Activated CD4-positive, alpha-beta T cell treated with anti-CD3 and anti-CD28 coated beads for 36 hours (primary cell): ENCODE measurements at regions of chr17 and their contacts with region 1.

Region 1: GRCh38 chr17:17812211-17813057 is 24.4 kb downstream of the SREBF1 start:
- DNase-seq: peak; percentile 78
- ATAC-seq: peak; percentile 37
- H3K4me3 Mint-ChIP-seq: no peak overlapping the region
- H3K27ac Mint-ChIP-seq: no peak overlapping the region
- H3K4me1 Mint-ChIP-seq: peaks cover 11% of the 10 kb centered on the region
- H3K27me3 Mint-ChIP-seq: no peaks in the 10 kb centered on the region

Region 2: DNA sequence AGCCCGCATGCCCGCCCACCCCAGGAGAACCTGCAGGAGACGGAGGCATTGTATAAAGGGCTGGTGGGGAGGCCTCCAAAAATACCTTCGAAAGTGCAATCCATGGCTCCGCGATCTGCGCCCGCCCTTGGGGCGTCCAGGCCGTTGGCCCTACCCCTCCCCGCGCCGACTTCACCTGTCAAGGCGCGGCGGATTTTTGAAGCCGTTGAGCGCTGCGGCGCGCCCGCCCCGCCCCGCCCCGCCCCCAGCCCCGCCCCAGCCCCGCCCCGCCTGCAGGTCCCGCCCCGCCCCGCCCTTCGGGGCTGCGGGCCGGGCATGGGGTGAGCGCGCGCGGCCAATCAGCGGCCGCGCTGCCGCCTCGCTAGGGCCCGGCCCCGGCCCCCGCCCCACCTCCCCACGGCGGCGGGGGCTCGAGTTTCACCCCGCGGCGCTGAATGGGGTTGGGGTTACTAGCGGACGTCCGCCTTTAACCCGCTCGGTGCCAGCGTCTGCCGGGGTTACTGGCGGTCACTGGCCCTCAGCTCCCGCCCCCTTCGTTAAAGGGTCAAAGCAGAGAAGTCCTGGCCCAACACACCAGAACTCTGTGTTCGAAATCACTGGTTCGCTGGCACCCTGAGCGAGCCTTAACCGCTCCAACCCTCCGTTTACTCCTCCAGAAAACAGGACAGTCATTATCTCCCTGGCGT is 11.1 kb after region 1 on chr17:
- CTCF ChIA-PET with region 1: interaction called, 10 read pairs
- POLR2A ChIA-PET with region 1: no interaction called
- intact Hi-C with region 1: no loop called
- DNase-seq: peak; percentile 90
- ATAC-seq: peak; percentile 80
- H3K4me3 Mint-ChIP-seq: peak overlapping the region; percentile 72
- H3K27ac Mint-ChIP-seq: peak overlapping the region; percentile 96
- H3K4me1 Mint-ChIP-seq: peaks cover 92% of the 10 kb centered on the region
- H3K27me3 Mint-ChIP-seq: no peaks in the 10 kb centered on the region